CD8-positive, alpha-beta T cell (primary cell): ENCODE measurements at regions of chr2 and their contacts with region 1.

Region 1: GRCh38 chr2:119914266-119914665 is 98.6 kb upstream of the EPB41L5 start:
- DNase-seq: no peak
- ATAC-seq: no peak
- H3K4me3 ChIP-seq: no peak overlapping the region
- H3K4me3 Mint-ChIP-seq: no peak overlapping the region
- H3K27ac ChIP-seq: no peak overlapping the region
- H3K27ac Mint-ChIP-seq: no peak overlapping the region
- H3K4me1 ChIP-seq: no peaks in the 10 kb centered on the region
- H3K4me1 Mint-ChIP-seq: peaks cover 9% of the 10 kb centered on the region
- H3K27me3 ChIP-seq: no peaks in the 10 kb centered on the region
- H3K27me3 Mint-ChIP-seq: no peaks in the 10 kb centered on the region
- CTCF ChIP-seq: no peak

Region 2: DNA sequence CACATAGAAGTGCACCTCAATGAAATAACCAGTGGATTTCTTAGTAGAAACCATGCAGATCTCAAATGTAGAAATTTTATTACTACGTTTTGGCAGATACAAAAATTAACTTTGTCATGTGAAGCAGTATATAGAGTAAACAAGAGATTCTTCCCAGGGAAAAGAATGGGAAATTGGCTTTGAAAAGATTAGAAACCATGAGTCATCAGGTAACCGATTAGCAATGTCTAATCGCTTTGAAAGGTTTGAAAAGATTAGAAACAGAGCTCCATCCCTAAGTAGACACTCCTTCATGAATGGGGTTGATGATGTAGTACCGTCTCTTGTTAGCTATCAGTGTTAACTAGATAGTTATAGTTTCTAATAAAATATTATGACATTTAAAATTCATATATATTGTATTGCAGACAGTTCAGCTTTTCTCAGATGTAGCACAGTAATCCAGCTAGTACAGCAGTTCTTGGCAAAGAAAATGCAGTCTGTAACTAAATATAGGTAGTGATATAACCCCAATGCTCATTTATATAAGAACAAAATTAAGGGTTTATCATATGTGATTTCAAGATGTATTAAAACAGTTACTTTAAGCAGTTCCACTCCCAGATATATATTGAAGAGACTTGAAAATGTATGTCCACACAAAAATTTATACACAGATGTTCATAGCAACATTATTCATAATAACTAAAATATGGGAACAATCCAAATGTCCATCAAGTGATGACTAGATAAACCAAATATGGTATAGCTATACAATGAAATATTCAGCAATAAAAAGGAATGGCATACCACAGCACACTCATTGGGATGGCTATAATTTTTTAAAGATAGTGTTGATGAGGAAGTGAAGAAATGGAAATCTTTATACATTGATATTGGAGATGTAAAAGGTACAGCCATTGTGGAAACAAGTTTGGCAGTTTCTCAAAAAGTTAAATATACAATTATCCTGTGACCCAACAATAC is 40.6 kb before region 1 on chr2:
- CTCF ChIA-PET with region 1: no interaction called
- POLR2A ChIA-PET with region 1: no interaction called
- intact Hi-C with region 1: loop called in 1 of 2 experiments (anchors 5 kb)
- DNase-seq: no peak
- ATAC-seq: no peak
- H3K4me3 ChIP-seq: no peak overlapping the region
- H3K4me3 Mint-ChIP-seq: no peak overlapping the region
- H3K27ac ChIP-seq: no peak overlapping the region
- H3K27ac Mint-ChIP-seq: no peak overlapping the region
- H3K4me1 ChIP-seq: peaks cover 5% of the 10 kb centered on the region
- H3K4me1 Mint-ChIP-seq: peaks cover 59% of the 10 kb centered on the region
- H3K27me3 ChIP-seq: no peaks in the 10 kb centered on the region
- H3K27me3 Mint-ChIP-seq: no peaks in the 10 kb centered on the region
- CTCF ChIP-seq: no peak

Region 3: DNA sequence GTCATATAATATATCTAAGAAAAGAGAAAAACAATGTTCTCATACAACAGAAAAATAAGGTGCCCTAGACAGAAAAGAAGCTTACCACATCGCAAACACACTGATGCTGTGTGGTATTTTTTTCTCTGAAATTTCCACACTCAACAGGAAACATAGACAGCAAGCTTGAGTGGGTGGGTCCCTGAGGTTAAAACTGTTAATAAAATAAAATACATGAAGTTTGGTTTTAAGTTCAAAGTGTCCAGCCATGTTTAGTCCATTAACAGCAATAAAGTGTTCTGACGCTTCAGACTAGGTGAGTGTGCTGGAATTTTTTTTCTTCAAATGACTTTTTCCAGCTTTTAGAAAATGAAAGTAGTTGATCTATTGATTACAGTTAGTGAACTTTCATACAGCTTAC is 15.3 kb after region 1 on chr2:
- CTCF ChIA-PET with region 1: no interaction called
- POLR2A ChIA-PET with region 1: interaction called, 3 read pairs
- intact Hi-C with region 1: loop called in 1 of 2 experiments (anchors 1 kb)
- DNase-seq: peak in 6 of 9 experiments; percentile 15 to 83 (median 26)
- ATAC-seq: peak; percentile 91
- H3K4me3 ChIP-seq: peak overlapping the region; percentile 48 to 63
- H3K4me3 Mint-ChIP-seq: peak overlapping the region; percentile 75
- H3K27ac ChIP-seq: peak overlapping the region; percentile 60 to 70
- H3K27ac Mint-ChIP-seq: peak overlapping the region; percentile 97
- H3K4me1 ChIP-seq: peaks cover 70% of the 10 kb centered on the region
- H3K4me1 Mint-ChIP-seq: peaks cover 73% of the 10 kb centered on the region
- H3K27me3 ChIP-seq: no peaks in the 10 kb centered on the region
- H3K27me3 Mint-ChIP-seq: no peaks in the 10 kb centered on the region
- CTCF ChIP-seq: no peak